GM13976 (cell line): ENCODE measurements at regions of chr2 and their contacts with region 1.

Region 1: DNA sequence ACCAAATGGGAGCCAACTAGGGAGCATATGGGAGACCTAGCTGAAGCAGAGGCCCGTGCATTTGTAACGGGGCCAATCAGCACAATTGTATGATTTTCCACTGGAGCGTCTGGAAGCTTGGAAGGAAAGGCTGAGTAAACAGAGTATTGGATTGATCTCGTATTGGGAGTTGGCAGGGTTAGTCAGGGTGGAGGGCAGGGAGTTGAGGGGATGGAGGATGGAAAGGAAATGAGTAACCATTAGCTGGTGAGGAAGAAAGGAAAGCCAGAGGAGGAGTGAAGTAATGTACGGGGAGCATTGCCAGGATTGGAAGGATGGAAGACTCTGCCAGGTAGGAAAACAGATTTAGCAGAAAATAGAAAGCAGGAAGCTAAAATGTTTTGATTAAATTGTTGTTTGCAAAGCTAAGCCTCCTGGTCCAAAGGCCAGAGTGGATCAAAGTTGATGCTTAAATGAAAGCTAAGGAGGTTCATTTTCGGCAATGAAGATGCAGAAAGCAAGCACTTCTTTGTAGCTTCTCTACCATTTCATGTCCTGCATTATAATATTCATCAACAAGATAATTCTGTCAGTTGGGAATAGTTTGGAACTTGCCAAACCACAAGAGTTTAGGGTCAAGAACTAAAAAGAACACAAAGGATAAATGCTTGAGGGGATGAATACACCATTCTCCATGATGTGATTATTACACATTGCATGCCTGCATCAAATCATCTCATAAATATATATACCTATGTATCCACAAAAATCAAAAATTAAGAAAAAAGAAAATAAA is 75.6 kb upstream of the TTN start:
- DNase-seq: no peak
- CTCF ChIP-seq: no peak

Region 2: DNA sequence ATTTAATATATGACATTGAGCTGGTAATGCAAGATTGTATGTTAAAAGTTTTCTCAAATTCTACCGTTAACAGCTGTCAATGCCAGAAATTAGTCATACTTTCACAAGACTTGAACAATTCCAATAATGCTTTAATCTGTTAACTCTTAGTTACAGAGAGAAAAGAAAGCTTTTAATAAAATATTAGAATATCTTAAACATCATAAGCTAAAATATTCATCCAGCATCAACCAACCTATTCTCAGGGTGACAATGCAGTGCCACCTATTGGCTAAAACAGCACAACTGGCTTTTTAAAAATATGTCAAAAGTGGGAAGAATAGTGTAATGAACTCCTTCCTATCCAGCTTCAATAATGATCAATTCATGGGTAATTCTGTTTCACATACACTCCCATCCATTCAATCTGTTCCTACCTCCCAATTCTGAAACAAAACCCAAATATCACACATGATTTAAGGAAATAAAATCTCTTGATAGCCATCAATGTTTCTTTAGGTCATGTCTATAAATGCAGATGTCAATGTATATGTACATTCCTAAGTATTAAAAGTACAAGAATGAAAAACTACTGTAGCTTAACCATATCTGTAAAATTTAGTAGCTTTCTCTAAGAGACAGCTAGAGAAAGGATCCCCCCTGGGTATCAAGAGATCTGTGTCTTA is 246.9 kb after region 1 on chr2:
- in situ Hi-C with region 1: loop called (anchors 10 kb)
- DNase-seq: peak; percentile 28
- CTCF ChIP-seq: peak; percentile 76

Region 3: GRCh38 chr2:179218848-179219594 is 336.2 kb after region 1 on chr2:
- in situ Hi-C with region 1: no loop called
- DNase-seq: peak; percentile 62
- CTCF ChIP-seq: peak; percentile 94